Prostate gland (tissue), 2 donors: ENCODE measurements at regions of chr18 and their contacts with region 1.

Region 1: GRCh38 chr18:21179590-21180220 is 62.3 kb upstream of the GREB1L start:
- DNase-seq: peak; percentile 46
- H3K4me3 ChIP-seq: no peak overlapping the region
- H3K27ac ChIP-seq: no peak overlapping the region
- H3K4me1 ChIP-seq: no peaks in the 10 kb centered on the region
- H3K27me3 ChIP-seq: no peaks in the 10 kb centered on the region
- CTCF ChIP-seq: peak; percentile 28 to 69 (median 64)
- POLR2A ChIP-seq: no peak

Region 2: DNA sequence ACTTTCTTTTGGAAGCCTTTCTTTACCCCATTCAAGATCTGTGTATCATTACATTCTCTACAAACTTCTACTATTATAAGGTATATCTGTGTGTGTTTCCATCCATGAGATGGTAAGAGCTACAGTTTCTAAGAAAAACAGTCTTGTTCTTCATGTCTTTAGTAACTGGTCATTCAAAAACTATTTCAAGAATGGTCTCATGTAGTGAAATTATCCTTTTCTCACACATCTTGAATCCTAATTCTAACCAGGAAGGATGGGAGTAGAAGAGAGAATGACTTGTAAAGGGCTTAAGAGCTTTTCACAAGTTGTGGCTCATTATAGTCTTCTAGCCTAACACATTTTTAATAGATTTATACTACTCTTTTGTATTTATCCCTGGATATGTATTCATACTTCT is 115.4 kb before region 1 on chr18:
- intact Hi-C with region 1: no loop called
- DNase-seq: no peak
- H3K4me3 ChIP-seq: no peak overlapping the region
- H3K27ac ChIP-seq: no peak overlapping the region
- H3K4me1 ChIP-seq: no peaks in the 10 kb centered on the region
- H3K27me3 ChIP-seq: no peaks in the 10 kb centered on the region
- CTCF ChIP-seq: no peak
- POLR2A ChIP-seq: no peak

Region 3: DNA sequence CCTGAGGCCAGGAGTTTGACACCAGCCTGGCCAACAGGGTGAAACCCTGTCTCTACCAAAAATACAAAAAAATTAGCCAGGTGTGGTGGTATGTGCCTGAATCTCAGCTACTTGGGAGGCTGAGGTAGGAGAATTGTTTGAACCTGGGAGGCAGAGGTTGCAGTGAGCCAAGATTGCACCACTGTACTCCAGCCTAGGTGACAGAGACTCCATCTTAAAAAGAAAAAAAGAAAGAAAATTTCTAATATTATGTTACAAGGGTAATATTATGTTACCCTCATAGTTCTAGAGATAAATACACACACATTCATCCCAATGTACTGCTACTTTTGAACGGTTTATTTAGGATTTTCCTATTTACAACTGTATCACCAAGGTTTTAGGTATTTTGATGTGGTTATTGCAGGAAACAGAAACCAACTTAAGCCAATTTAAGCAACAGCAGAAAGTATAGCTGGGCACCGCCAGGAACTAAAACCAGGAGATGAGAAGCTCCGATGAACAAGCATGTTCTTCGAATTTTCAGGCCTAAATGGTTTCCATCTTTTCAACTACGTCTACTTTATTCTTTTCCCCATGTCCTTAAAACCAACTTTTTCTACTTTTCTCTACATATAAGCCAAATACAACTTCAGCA is 56.3 kb before region 1 on chr18:
- intact Hi-C with region 1: loop called (anchors 5 kb)
- DNase-seq: no peak
- H3K4me3 ChIP-seq: no peak overlapping the region
- H3K27ac ChIP-seq: no peak overlapping the region
- H3K4me1 ChIP-seq: no peaks in the 10 kb centered on the region
- H3K27me3 ChIP-seq: no peaks in the 10 kb centered on the region
- CTCF ChIP-seq: no peak
- POLR2A ChIP-seq: no peak

Region 4: DNA sequence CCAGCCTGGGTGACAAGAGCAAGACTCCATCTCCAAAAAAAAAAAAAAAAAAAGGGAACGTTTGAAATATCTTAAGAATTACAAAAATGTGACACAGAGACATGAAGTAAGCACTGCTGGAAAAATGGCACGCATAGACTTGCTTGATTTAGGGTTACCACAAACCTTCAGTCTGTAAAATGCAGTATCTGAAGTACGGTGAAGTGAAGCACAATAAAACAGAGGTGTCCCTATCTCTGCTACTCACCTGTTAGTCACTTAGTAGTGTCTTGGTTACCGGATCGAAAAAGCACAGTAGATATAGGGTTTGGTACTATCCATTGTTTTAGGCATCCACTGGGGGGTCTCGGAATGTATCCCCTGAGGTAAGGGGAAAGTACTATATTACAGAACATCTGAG is 50.7 kb after region 1 on chr18:
- intact Hi-C with region 1: no loop called
- DNase-seq: no peak
- H3K4me3 ChIP-seq: no peak overlapping the region
- H3K27ac ChIP-seq: no peak overlapping the region
- H3K4me1 ChIP-seq: no peaks in the 10 kb centered on the region
- H3K27me3 ChIP-seq: no peaks in the 10 kb centered on the region
- CTCF ChIP-seq: no peak
- POLR2A ChIP-seq: no peak